ENCODE measurements at regions of chr10 and their contacts with region 1.

Region 1: DNA sequence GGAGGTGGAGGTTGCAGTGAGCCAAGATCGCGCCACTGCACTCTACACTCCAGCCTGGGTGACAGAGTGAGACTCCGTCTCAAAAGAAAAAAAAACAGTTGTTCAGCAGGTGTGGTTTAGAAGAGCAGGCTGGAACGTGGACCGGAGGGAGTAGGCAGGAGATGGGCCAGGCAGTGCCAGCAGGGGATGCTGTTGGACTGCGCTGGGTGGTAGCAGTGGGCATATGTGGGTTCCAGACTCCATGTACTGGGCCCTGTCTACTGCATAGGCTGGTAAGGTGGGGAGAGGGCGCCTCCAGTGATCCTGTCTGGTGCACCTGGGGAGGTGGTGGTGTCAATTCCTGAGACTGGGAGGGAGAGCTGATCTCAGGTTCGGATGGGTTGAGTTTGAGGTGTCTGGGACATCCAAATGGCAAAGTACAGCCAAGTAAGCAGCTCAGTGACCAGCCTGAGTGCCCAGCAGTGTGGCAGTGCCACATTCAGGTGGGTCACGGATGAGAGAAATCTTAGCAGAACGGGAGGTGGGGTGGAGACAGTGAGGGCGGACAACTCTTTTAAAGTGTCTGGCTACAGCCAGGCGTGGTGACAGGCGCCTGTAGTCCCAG is 25.9 kb downstream of the SFXN4 start:
- DNase-seq: peak; percentile 55 to 78 (median 70)
- H3K4me3 ChIP-seq: no peak overlapping the region
- H3K27ac ChIP-seq: no peak overlapping the region
- H3K4me1 ChIP-seq: peaks cover 9 to 31% (median 28%) of the 10 kb centered on the region in 4 experiments
- H3K27me3 ChIP-seq: no peaks in the 10 kb centered on the region

Region 2: GRCh38 chr10:119290291-119291048 is 150.9 kb after region 1 on chr10:
- CTCF ChIA-PET with region 1: no interaction called
- POLR2A ChIA-PET with region 1: no interaction called
- DNase-seq: no peak
- H3K4me3 ChIP-seq: no peak overlapping the region
- H3K27ac ChIP-seq: no peak overlapping the region
- H3K4me1 ChIP-seq: peaks cover 0 to 12% (median 7%) of the 10 kb centered on the region in 4 experiments
- H3K27me3 ChIP-seq: peaks cover 0 to 9% (median 3%) of the 10 kb centered on the region in 5 experiments

Region 3: GRCh38 chr10:119416855-119417254 is 277.3 kb after region 1 on chr10:
- CTCF ChIA-PET with region 1: interaction called, 16 read pairs
- POLR2A ChIA-PET with region 1: no interaction called
- DNase-seq: peak; percentile 71 to 83 (median 75)
- H3K4me3 ChIP-seq: no peak overlapping the region
- H3K27ac ChIP-seq: no peak overlapping the region
- H3K4me1 ChIP-seq: peaks cover 0 to 10% (median 4%) of the 10 kb centered on the region in 4 experiments
- H3K27me3 ChIP-seq: peaks cover 0 to 8% (median 0%) of the 10 kb centered on the region in 5 experiments

Region 4: GRCh38 chr10:120161111-120161510 is 1021.5 kb after region 1 on chr10:
- CTCF ChIA-PET with region 1: no interaction called
- POLR2A ChIA-PET with region 1: no interaction called
- DNase-seq: no peak
- H3K4me3 ChIP-seq: no peak overlapping the region
- H3K27ac ChIP-seq: no peak overlapping the region
- H3K4me1 ChIP-seq: no peaks in the 10 kb centered on the region
- H3K27me3 ChIP-seq: peaks cover 0 to 2% (median 0%) of the 10 kb centered on the region in 5 experiments

Measured in common myeloid progenitor, CD34-positive (primary cell).